Left lung (tissue), 14 donors: ENCODE measurements at regions of chr7 and their contacts with region 1.

Region 1: DNA sequence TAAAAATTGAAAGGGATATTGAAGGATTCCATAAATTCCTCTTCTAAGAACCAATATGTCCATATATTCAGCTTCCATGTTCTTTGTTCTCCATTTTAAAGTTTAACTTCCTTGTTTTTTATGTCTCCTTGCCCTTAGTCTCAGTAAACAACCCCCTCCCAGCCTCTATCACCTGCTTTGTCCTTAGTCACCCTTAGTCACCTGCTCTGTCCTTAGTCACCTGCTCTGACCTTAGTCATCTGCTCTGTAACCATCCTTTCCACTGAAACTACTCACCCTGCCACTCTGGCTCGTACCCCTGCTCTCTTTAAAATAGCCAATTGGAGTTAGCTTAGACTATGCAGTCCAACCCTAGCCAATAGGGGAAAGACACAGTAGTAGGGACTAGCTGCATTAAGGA is 136.2 kb upstream of the TMEM106B start:
- DNase-seq: no peak
- ATAC-seq: no peak
- H3K4me3 ChIP-seq: no peak overlapping the region
- H3K27ac ChIP-seq: no peak overlapping the region
- H3K4me1 ChIP-seq: no peaks in the 10 kb centered on the region
- H3K27me3 ChIP-seq: no peaks in the 10 kb centered on the region
- CTCF ChIP-seq: no peak

Region 2: GRCh38 chr7:12322284-12322902 is 247.5 kb after region 1 on chr7:
- intact Hi-C with region 1: loop called in 1 of 2 experiments (anchors 5 kb)
- DNase-seq: peak in 1 of 4 donors; percentile 21
- ATAC-seq: peak; percentile 27
- H3K4me3 ChIP-seq: no peak overlapping the region
- H3K27ac ChIP-seq: no peak overlapping the region
- H3K4me1 ChIP-seq: no peaks in the 10 kb centered on the region
- H3K27me3 ChIP-seq: no peaks in the 10 kb centered on the region
- CTCF ChIP-seq: peak; percentile 36 to 61

Region 3: DNA sequence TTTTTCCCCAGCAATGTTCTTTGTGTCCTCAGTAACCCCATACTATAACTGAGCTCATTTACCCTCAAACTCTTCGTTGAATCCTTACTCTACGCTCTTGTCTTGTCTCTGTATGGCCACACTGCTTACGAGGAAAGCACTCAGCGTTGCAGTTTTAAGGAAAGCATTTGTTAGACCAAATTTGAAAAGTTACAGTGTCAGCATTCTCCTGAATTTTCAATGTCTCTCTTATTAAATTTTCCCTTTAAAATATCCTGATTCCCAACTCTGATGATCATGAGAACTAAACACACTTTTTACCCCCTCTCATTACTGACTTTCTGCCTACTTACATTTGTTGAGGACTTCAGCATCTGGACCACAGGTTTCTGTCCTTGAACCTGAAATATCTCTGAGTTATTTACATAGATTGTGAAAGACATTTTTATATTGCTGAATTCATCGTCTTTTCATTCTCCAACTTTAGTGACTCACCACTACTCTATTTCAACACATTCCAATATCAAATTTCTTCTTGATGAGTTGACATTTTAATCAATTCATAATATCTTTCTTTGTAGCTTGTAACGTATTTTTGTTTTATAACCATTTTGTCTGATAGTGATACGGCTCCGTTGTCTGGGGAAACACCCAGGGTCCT is 348.6 kb after region 1 on chr7:
- intact Hi-C with region 1: no loop called
- DNase-seq: no peak
- ATAC-seq: no peak
- H3K4me3 ChIP-seq: no peak overlapping the region
- H3K27ac ChIP-seq: no peak overlapping the region
- H3K4me1 ChIP-seq: no peaks in the 10 kb centered on the region
- H3K27me3 ChIP-seq: no peaks in the 10 kb centered on the region
- CTCF ChIP-seq: no peak